Adrenal gland (tissue), 19 donors: ENCODE measurements at regions of chr10 and their contacts with region 1.

Region 1: GRCh38 chr10:82796510-82796909 is 921.5 kb downstream of the NRG3 start:
- DNase-seq: no peak
- H3K4me3 ChIP-seq: no peak overlapping the region
- H3K27ac ChIP-seq: no peak overlapping the region
- H3K4me1 ChIP-seq: no peaks in the 10 kb centered on the region
- H3K27me3 ChIP-seq: no peaks in the 10 kb centered on the region
- CTCF ChIP-seq: peak in 4 of 6 experiments; percentile 37 to 58 (median 48)
- POLR2A ChIP-seq: no peak

Region 2: DNA sequence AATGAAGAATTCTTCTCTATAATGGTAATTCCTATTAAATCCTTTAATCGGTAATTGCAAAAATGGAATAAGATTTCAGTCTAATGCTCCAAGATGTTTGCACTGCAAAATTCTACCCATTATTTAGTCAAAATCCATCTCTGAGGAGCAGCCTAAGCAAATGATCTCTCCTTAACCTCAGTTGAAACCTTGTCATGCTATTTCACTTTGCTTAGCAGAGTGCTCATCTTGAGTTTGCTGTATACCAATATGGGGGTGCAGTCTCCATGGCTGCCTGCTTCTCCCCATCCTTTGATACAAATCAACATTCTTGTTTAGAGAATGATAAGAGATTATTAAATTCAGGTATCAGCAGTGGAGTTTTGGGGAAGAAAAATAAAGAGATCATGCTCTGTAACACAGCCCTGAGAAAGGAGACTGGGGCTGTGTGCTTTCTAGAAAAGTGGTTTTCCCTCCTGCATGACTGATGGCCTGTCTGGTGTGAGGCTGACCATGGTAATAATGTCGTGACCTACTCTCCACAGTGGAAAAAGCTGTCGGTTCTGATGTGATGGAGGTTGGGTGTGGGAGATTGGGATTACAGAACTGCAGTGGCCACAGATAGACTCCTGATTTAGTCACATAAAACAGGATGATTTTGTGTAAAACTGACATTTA is 60.6 kb after region 1 on chr10:
- intact Hi-C with region 1: no loop called
- DNase-seq: no peak
- H3K4me3 ChIP-seq: no peak overlapping the region
- H3K27ac ChIP-seq: no peak overlapping the region
- H3K4me1 ChIP-seq: no peaks in the 10 kb centered on the region
- H3K27me3 ChIP-seq: no peaks in the 10 kb centered on the region
- CTCF ChIP-seq: no peak
- POLR2A ChIP-seq: no peak

Region 3: GRCh38 chr10:82969405-82969804 is 172.9 kb after region 1 on chr10:
- intact Hi-C with region 1: loop called in 1 of 2 experiments (anchors 10 kb)
- DNase-seq: no peak
- H3K4me3 ChIP-seq: no peak overlapping the region
- H3K27ac ChIP-seq: no peak overlapping the region
- H3K4me1 ChIP-seq: no peaks in the 10 kb centered on the region
- H3K27me3 ChIP-seq: no peaks in the 10 kb centered on the region
- CTCF ChIP-seq: peak; percentile 29 to 67 (median 57)
- POLR2A ChIP-seq: no peak